Activated T-helper 1 cell treated with anti-CD3 and anti-CD28 coated beads, Interleukin-12 subunit alpha, Interleukin-12 subunit beta, Interleukin-2, Interleukin-4 antibody, amounts not matched to agents 30 ng/mL and 10 ng/mL and 1 ng/mL, durations not matched to agents 14 hours and 24 hours and 36 hours (primary cell): ENCODE measurements at regions of chr9 and their contacts with region 1.

Region 1: DNA sequence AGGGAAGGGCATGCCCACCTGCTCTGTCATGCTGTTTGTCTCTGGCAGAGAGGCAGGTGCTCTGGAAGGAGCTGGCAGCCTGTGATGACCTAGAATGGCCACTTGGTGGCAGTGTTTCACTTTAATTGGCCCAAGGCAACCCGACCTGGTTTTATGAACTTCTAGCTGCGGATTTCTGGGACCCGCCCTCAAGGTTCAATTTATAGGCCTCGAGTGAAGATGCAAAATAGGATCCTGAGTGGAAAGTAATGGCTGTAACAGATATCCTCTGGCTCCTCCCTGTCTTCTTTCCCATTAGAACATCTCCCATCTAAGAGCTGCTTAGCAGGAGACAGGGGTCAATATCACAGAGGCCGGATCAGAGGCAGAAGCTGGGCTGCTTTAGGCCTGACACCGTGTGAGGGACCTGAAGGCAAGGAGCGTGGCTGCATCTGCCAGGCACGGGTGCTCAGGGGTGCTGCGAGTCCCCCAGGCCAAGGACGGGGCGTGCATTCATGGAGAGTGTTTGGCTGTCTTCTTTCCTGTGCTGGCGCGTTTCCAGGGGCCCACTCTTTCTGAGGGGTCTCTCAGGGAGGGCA is 56.7 kb upstream of the SLC28A3 start:
- DNase-seq: peak; percentile 43
- H3K4me3 Mint-ChIP-seq: no peak overlapping the region
- H3K27ac Mint-ChIP-seq: no peak overlapping the region
- H3K4me1 Mint-ChIP-seq: no peaks in the 10 kb centered on the region
- H3K27me3 Mint-ChIP-seq: no peaks in the 10 kb centered on the region

Region 2: GRCh38 chr9:84411683-84412267 is 14.5 kb after region 1 on chr9:
- intact Hi-C with region 1: no loop called
- DNase-seq: no peak
- H3K4me3 Mint-ChIP-seq: no peak overlapping the region
- H3K27ac Mint-ChIP-seq: no peak overlapping the region
- H3K4me1 Mint-ChIP-seq: no peaks in the 10 kb centered on the region
- H3K27me3 Mint-ChIP-seq: no peaks in the 10 kb centered on the region

Region 3: GRCh38 chr9:84513473-84513872 is 116.2 kb after region 1 on chr9:
- intact Hi-C with region 1: no loop called
- DNase-seq: no peak
- H3K4me3 Mint-ChIP-seq: no peak overlapping the region
- H3K27ac Mint-ChIP-seq: no peak overlapping the region
- H3K4me1 Mint-ChIP-seq: no peaks in the 10 kb centered on the region
- H3K27me3 Mint-ChIP-seq: no peaks in the 10 kb centered on the region

Region 4: DNA sequence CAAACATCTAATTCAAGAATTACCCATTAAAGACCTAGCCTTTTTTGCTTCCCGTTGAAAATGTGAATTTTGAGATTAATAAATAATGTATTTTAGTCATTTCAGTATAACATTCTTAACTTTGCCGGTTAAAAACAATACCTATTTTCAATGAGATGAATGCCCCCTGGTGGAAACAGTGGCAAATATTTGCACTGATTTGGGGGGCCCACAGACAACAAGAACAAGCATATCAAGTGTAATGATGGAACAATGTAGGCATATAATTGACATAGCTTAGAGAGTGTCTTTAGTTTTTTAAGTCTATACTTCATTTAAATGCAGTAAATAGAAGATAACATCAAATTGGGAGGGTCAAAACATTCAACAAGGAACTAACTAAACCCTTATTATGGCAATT is 384.2 kb after region 1 on chr9:
- intact Hi-C with region 1: loop called (anchors 1 kb)
- DNase-seq: no peak
- H3K4me3 Mint-ChIP-seq: no peak overlapping the region
- H3K27ac Mint-ChIP-seq: no peak overlapping the region
- H3K4me1 Mint-ChIP-seq: peaks cover 13% of the 10 kb centered on the region
- H3K27me3 Mint-ChIP-seq: peaks cover 7% of the 10 kb centered on the region

Region 5: GRCh38 chr9:84953797-84954705 is 556.8 kb after region 1 on chr9:
- intact Hi-C with region 1: loop called (anchors 5 kb)
- DNase-seq: peak; percentile 39
- H3K4me3 Mint-ChIP-seq: no peak overlapping the region
- H3K27ac Mint-ChIP-seq: no peak overlapping the region
- H3K4me1 Mint-ChIP-seq: peaks cover 7% of the 10 kb centered on the region
- H3K27me3 Mint-ChIP-seq: no peaks in the 10 kb centered on the region

Region 6: DNA sequence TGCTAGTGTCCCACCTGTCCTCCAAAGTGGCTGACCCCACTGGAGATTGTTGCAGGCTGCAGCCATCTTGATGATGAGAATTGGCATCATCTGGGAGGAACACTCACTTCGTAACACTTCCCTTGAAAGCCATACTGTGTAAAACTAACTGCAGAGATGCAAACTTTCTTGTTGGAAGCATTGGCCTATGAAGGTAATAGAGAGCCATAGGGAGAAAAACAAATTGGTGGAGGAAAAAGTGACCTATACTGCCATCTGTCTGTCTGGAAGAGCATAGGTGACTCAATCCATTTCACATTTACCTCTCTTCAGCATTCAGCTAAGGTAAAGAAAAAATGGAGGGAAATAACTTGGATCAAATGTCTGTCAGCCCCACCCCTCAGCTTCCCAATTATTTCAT is 745.7 kb after region 1 on chr9:
- intact Hi-C with region 1: loop called (anchors 1 kb)
- DNase-seq: no peak
- H3K4me3 Mint-ChIP-seq: no peak overlapping the region
- H3K27ac Mint-ChIP-seq: no peak overlapping the region
- H3K4me1 Mint-ChIP-seq: no peaks in the 10 kb centered on the region
- H3K27me3 Mint-ChIP-seq: no peaks in the 10 kb centered on the region

Region 7: DNA sequence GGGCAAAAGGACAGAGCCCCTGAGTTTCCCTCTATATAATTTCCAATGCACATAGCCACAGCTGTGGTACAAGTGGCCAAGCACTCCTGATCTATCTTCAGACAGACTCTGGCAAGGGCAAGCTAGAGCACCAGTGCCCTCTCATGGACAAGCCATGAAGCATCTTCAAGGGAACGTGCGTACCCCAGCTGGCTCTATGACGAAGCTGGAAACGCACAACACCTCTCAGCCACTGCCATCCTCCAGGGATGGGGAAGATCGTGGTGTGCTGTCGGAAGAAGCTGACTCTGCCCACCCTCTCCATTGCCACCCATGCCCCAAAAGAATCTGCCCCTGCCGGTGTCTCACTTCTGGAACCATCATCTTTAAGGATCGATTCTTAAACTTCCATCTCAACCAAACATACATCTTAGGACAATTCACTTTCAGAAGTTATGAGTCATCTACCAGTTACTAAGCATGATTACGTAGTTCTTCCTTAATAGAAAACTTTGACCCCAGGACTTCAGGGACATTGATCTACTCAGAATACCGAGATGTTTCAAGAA is 861.7 kb after region 1 on chr9:
- intact Hi-C with region 1: loop called (anchors 2 kb)
- DNase-seq: no peak
- H3K4me3 Mint-ChIP-seq: no peak overlapping the region
- H3K27ac Mint-ChIP-seq: no peak overlapping the region
- H3K4me1 Mint-ChIP-seq: no peaks in the 10 kb centered on the region
- H3K27me3 Mint-ChIP-seq: peaks cover 2% of the 10 kb centered on the region

Region 8: DNA sequence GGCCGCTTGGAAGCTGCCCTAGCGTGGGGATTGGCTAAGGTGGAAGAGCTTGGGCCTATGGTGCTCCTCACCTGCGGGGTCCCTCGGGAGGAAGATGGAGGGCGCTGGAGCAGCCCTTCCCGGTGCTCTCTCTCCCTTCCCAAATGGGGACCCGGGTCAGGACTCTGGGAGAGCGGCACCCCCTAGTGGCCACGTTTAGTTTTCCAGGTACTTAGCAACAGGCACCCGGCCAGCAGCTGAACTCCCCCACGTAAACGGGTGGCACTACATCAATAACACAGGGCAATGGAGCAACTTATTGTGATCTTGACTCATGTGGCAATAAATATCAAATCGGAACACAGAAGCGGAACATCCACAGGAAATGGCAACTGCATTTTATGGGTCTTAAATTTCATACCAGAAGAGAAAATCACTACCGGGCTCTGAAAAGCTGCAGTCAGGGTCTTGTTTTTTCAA is 1027.9 kb after region 1 on chr9:
- intact Hi-C with region 1: loop called (anchors 1 kb)
- DNase-seq: peak; percentile 30
- H3K4me3 Mint-ChIP-seq: no peak overlapping the region
- H3K27ac Mint-ChIP-seq: no peak overlapping the region
- H3K4me1 Mint-ChIP-seq: peaks cover 6% of the 10 kb centered on the region
- H3K27me3 Mint-ChIP-seq: peaks cover 9% of the 10 kb centered on the region

Region 9: DNA sequence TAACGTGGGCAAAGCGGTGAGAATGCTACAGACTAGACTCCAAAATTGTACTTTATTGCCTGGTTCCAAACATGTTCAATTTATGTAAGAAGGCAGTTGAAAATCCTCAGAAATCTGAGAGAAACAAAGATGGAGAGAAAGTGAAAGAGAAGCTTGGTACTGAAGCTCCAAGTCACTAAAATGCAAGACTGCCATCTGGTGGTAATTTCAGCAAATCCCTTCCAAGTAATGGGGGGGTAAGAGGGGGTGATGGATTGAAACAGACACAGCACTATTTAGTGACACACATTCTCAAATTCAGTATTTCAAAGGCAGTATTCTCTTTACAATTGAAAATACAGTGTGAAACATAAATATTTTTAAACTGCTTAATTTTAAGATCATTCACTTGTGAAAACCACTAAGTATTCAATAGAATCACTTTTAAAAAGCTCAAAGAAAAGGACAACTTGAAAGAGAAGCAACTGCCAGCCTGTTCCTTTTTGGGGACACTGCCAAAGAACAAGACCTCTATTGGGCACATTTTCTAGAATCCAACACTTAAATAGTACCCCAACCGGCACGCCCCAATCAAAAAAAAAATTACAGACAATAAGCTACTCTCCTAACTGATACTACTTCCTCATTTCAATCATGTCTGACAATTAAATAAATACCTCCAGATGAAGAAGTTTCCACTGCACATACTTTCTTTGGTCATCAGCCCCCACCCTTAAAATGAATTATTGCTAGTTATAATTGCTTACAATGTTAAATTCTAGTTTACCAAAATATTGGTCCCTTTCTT is 1213.0 kb after region 1 on chr9:
- intact Hi-C with region 1: loop called (anchors 1 kb)
- DNase-seq: peak; percentile 22
- H3K4me3 Mint-ChIP-seq: no peak overlapping the region
- H3K27ac Mint-ChIP-seq: no peak overlapping the region
- H3K4me1 Mint-ChIP-seq: peaks cover 10% of the 10 kb centered on the region
- H3K27me3 Mint-ChIP-seq: no peaks in the 10 kb centered on the region